ENCODE measurements at regions of chr20 and their contacts with region 1.

Region 1: GRCh38 chr20:2752567-2753460 is 47.6 kb downstream of the CPXM1 start:
- DNase-seq: peak; percentile 31
- ATAC-seq: peak; percentile 78
- H3K4me3 ChIP-seq: peak overlapping the region; percentile 61 to 73
- H3K27ac ChIP-seq: peak overlapping the region; percentile 53; the same call in 1 of the 2 replicates
- H3K4me1 ChIP-seq: peaks cover 0 to 22% of the 10 kb centered on the region in 2 experiments; a peak in 2 of 4 replicates
- H3K27me3 ChIP-seq: no peaks in the 10 kb centered on the region
- CTCF ChIP-seq: peak; percentile 77 to 95 (median 92)
- POLR2A ChIP-seq: no peak
- RAD21 ChIP-seq: peak; percentile 52

Region 2: DNA sequence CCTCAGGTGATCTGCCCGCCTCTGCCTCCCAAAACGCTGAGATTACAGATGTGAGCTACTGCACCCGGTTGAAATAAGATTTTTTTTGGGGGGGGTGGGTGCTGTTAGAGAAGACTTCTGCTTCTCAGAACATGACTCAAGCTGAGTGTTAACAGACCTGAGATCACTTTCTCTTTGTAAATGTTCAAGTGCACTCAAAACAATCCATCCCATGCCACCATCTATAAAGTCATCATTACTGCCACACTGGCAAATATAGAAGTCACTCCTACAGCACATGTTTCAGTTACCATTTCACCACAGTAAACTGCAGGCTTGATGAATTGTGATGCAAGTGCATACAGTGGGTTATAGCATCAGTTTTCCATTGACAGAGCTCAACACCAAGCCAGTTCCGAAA is 96.7 kb after region 1 on chr20:
- CTCF ChIA-PET with region 1: interaction called, 29 read pairs
- POLR2A ChIA-PET with region 1: no interaction called
- RAD21 ChIA-PET with region 1: interaction called in 1 of 2 experiments, 6 read pairs
- intact Hi-C with region 1: loop called (anchors 1 kb)
- DNase-seq: no peak
- ATAC-seq: no peak
- H3K4me3 ChIP-seq: no peak overlapping the region
- H3K27ac ChIP-seq: no peak overlapping the region
- H3K4me1 ChIP-seq: no peaks in the 10 kb centered on the region
- H3K27me3 ChIP-seq: no peaks in the 10 kb centered on the region
- CTCF ChIP-seq: no peak
- POLR2A ChIP-seq: no peak
- RAD21 ChIP-seq: no peak

Measured in HCT116 (cell line).